ENCODE measurements at regions of chr15 and their contacts with region 1.

Region 1: GRCh38 chr15:90529371-90530249 is at the start of gene CRTC3:
- DNase-seq: peak; percentile 49 to 75 (median 67)
- ATAC-seq: peak; percentile 88
- H3K4me3 ChIP-seq: peak within 1 kb of the TSS; percentile 94
- H3K4me3 Mint-ChIP-seq: peak within 1 kb of the TSS; percentile 96 to 100 (median 97)
- H3K27ac ChIP-seq: peak within 1 kb of the TSS; percentile 92
- H3K27ac Mint-ChIP-seq: peak within 1 kb of the TSS; percentile 80 to 98 (median 94)
- H3K4me1 ChIP-seq: peaks cover 18% of the 10 kb centered on the region in 2 donors
- H3K4me1 Mint-ChIP-seq: peaks cover 34 to 49% (median 46%) of the 10 kb centered on the region in 7 donors
- H3K27me3 ChIP-seq: no peaks in the 10 kb centered on the region
- H3K27me3 Mint-ChIP-seq: no peaks in the 10 kb centered on the region
- total RNA-seq, gene CRTC3: 104 to 132 (median 109) TPM

Region 2: GRCh38 chr15:90489944-90490343 is 39.7 kb before region 1 on chr15:
- CTCF ChIA-PET with region 1: no interaction called
- POLR2A ChIA-PET with region 1: interaction called, 3 read pairs
- intact Hi-C with region 1: loop called in 1 of 2 experiments (anchors 5 kb)
- DNase-seq: no peak
- ATAC-seq: no peak
- H3K4me3 ChIP-seq: no peak overlapping the region
- H3K4me3 Mint-ChIP-seq: no peak overlapping the region
- H3K27ac ChIP-seq: no peak overlapping the region
- H3K27ac Mint-ChIP-seq: peak overlapping the region in 8 of 9 donors; percentile 0 to 33 (median 14)
- H3K4me1 ChIP-seq: peaks cover 0 to 9% of the 10 kb centered on the region in 2 donors
- H3K4me1 Mint-ChIP-seq: peaks cover 8 to 24% (median 19%) of the 10 kb centered on the region in 7 donors
- H3K27me3 ChIP-seq: no peaks in the 10 kb centered on the region
- H3K27me3 Mint-ChIP-seq: no peaks in the 10 kb centered on the region

Region 3: GRCh38 chr15:90545095-90545494 is 15.5 kb after region 1 on chr15:
- CTCF ChIA-PET with region 1: interaction called, 11 read pairs
- POLR2A ChIA-PET with region 1: interaction called, 21 read pairs
- intact Hi-C with region 1: loop called in 1 of 2 experiments (anchors 2 kb)
- DNase-seq: peak in 1 of 9 donors; percentile 24
- ATAC-seq: no peak
- H3K4me3 ChIP-seq: no peak overlapping the region
- H3K4me3 Mint-ChIP-seq: peak overlapping the region in 5 of 10 donors; percentile 0 to 59 (median 37)
- H3K27ac ChIP-seq: no peak overlapping the region
- H3K27ac Mint-ChIP-seq: peak overlapping the region in 8 of 9 donors; percentile 13 to 94 (median 72)
- H3K4me1 ChIP-seq: peaks cover 0 to 52% of the 10 kb centered on the region in 2 donors
- H3K4me1 Mint-ChIP-seq: peaks cover 35 to 85% (median 76%) of the 10 kb centered on the region in 7 donors
- H3K27me3 ChIP-seq: no peaks in the 10 kb centered on the region
- H3K27me3 Mint-ChIP-seq: no peaks in the 10 kb centered on the region

Region 4: DNA sequence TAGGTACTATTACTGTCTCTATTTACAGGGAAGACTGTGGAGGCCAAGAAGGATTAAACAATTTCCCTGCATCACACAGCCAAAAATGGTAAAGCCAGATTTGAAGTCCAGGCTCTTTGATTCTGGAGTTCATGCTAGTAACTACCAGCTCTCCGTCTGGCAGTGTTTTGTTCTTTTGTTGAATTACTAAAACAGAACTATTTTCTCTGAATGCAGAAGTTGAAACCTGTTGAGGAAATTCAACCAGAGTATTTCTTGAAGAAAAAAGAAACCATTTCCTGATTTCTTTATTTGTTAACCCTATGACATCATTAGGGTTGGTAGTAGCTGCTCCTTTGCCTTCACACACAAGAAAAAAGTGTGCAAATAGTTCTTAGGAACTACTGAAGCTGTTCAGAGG is 34.4 kb after region 1 on chr15:
- CTCF ChIA-PET with region 1: interaction called, 4 read pairs
- POLR2A ChIA-PET with region 1: interaction called, 15 read pairs
- intact Hi-C with region 1: loop called (anchors 1 to 2 kb)
- DNase-seq: peak in 7 of 9 donors; percentile 46 to 80 (median 70)
- ATAC-seq: peak; percentile 65
- H3K4me3 ChIP-seq: peak overlapping the region; percentile 3
- H3K4me3 Mint-ChIP-seq: peak overlapping the region; percentile 60 to 90 (median 74)
- H3K27ac ChIP-seq: peak overlapping the region; percentile 68
- H3K27ac Mint-ChIP-seq: peak overlapping the region; percentile 89 to 99 (median 95)
- H3K4me1 ChIP-seq: peaks cover 49 to 89% of the 10 kb centered on the region in 2 donors
- H3K4me1 Mint-ChIP-seq: peaks cover 65 to 97% (median 90%) of the 10 kb centered on the region in 7 donors
- H3K27me3 ChIP-seq: no peaks in the 10 kb centered on the region
- H3K27me3 Mint-ChIP-seq: no peaks in the 10 kb centered on the region

Region 5: DNA sequence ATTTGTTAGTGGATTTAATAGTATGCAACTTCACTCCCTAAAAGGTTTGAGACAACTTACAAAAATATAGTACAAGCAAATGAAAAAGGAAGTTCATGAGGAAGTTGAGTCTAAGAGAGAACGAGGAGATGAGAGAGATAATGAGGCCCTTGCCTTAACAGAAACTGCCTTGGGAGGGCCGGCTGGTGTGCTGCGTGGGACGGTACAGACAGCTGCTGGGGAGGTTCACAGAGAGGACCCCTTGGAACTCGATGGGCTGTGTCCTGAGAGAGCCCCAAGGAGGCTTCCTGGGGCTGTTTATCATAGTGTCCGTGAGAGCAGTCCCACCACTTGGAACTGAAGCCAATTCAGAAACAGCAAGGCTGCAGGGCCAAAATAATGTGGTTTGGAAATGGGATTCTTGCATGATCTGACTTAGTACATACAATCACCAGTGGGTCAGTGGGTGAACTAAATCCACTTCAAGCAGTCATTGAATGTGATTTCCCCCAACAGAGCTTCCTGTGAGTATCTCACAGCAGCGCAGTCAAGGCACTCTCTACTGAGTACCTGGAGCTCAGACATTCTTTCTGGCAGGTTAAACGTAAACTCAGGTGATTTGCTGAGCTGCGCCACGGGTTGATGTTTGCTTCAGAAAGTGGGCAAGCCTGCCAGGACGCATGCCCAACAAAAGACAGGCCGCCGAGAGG is 90.9 kb after region 1 on chr15:
- CTCF ChIA-PET with region 1: no interaction called
- POLR2A ChIA-PET with region 1: interaction called, 8 read pairs
- intact Hi-C with region 1: loop called (anchors 2 to 5 kb)
- DNase-seq: peak in 5 of 9 donors; percentile 28 to 45 (median 39)
- ATAC-seq: peak; percentile 80
- H3K4me3 ChIP-seq: peak overlapping the region; percentile 32
- H3K4me3 Mint-ChIP-seq: peak overlapping the region; percentile 42 to 82 (median 75)
- H3K27ac ChIP-seq: peak overlapping the region; percentile 53
- H3K27ac Mint-ChIP-seq: peak overlapping the region; percentile 85 to 97 (median 90)
- H3K4me1 ChIP-seq: peaks cover 0 to 18% of the 10 kb centered on the region in 2 donors
- H3K4me1 Mint-ChIP-seq: peaks cover 21 to 44% (median 38%) of the 10 kb centered on the region in 7 donors
- H3K27me3 ChIP-seq: no peaks in the 10 kb centered on the region
- H3K27me3 Mint-ChIP-seq: no peaks in the 10 kb centered on the region

Measured in naive thymus-derived CD4-positive, alpha-beta T cell (primary cell).